ENCODE measurements at regions of chr9 and their contacts with region 1.

Region 1: GRCh38 chr9:78439190-78439865 is 142.4 kb downstream of the PSAT1 start:
- DNase-seq: peak; percentile 76
- H3K4me3 ChIP-seq: no peak overlapping the region
- H3K27ac ChIP-seq: no peak overlapping the region
- H3K4me1 ChIP-seq: no peaks in the 10 kb centered on the region
- H3K27me3 ChIP-seq: peaks cover 4 to 18% of the 10 kb centered on the region in 2 experiments
- CTCF ChIP-seq: peak; percentile 89 to 91
- POLR2A ChIP-seq: no peak

Region 2: GRCh38 chr9:78428640-78429039 is 10.7 kb before region 1 on chr9:
- CTCF ChIA-PET with region 1: interaction called, 15 read pairs
- POLR2A ChIA-PET with region 1: no interaction called
- dilution Hi-C with region 1: no loop called
- intact Hi-C with region 1: no loop called
- DNase-seq: no peak
- H3K4me3 ChIP-seq: no peak overlapping the region
- H3K27ac ChIP-seq: no peak overlapping the region
- H3K4me1 ChIP-seq: no peaks in the 10 kb centered on the region
- H3K27me3 ChIP-seq: peaks cover 0 to 2% of the 10 kb centered on the region in 2 experiments
- CTCF ChIP-seq: no peak
- POLR2A ChIP-seq: no peak

Region 3: GRCh38 chr9:79233542-79233941 is 794.2 kb after region 1 on chr9:
- CTCF ChIA-PET with region 1: interaction called, 4 read pairs
- POLR2A ChIA-PET with region 1: no interaction called
- dilution Hi-C with region 1: no loop called
- intact Hi-C with region 1: loop called (anchors 1 kb)
- DNase-seq: peak; percentile 34
- H3K4me3 ChIP-seq: no peak overlapping the region
- H3K27ac ChIP-seq: no peak overlapping the region
- H3K4me1 ChIP-seq: no peaks in the 10 kb centered on the region
- H3K27me3 ChIP-seq: peaks cover 0 to 3% of the 10 kb centered on the region in 2 experiments
- CTCF ChIP-seq: peak; percentile 42 to 54
- POLR2A ChIP-seq: no peak

Region 4: DNA sequence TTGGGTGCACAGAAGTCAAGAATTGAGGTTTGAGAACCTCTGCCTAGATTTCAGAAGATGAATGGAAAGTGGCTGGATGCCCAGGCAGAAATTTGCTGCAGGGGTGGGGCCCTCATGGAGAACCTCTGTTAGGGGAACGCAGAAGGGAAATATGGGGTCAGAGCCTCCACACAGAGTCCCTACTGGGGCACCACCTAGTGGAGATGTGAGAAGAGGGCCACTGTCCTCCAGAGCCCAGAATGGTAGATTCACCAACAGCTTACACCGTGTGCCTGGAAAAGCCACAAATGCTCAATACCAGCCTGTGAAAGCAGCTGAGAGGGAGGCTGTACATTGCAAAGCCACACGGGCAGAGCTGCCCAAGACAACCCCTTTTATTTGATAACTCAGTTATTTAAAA is 1516.0 kb after region 1 on chr9:
- CTCF ChIA-PET with region 1: no interaction called
- POLR2A ChIA-PET with region 1: no interaction called
- dilution Hi-C with region 1: no loop called
- intact Hi-C with region 1: loop called (anchors 2 kb)
- DNase-seq: no peak
- H3K4me3 ChIP-seq: no peak overlapping the region
- H3K27ac ChIP-seq: no peak overlapping the region
- H3K4me1 ChIP-seq: no peaks in the 10 kb centered on the region
- H3K27me3 ChIP-seq: no peaks in the 10 kb centered on the region
- CTCF ChIP-seq: peak; percentile 18 to 43
- POLR2A ChIP-seq: no peak

Measured in endothelial cell of umbilical vein (primary cell).